Esophagus muscularis mucosa (tissue), 4 donors: ENCODE measurements at regions of chr3 and their contacts with region 1.

Region 1: GRCh38 chr3:64267721-64268604 is 42.7 kb upstream of the PRICKLE2 start:
- DNase-seq: peak; percentile 93
- H3K4me3 ChIP-seq: peak overlapping the region; percentile 78 to 80 (median 80)
- H3K27ac ChIP-seq: peak overlapping the region; percentile 92 to 96 (median 94)
- H3K4me1 ChIP-seq: peaks cover 37 to 48% (median 41%) of the 10 kb centered on the region in 4 donors
- H3K27me3 ChIP-seq: no peaks in the 10 kb centered on the region
- CTCF ChIP-seq: peak in 1 of 3 experiments; percentile 9
- EP300 ChIP-seq: no peak
- POLR2A ChIP-seq: peak; percentile 57

Region 2: GRCh38 chr3:64030741-64031140 is 237.2 kb before region 1 on chr3:
- intact Hi-C with region 1: loop called (anchors 10 kb)
- DNase-seq: no peak
- H3K4me3 ChIP-seq: peak overlapping the region; percentile 19 to 42 (median 34)
- H3K27ac ChIP-seq: peak overlapping the region in 2 of 4 donors; percentile 33 to 62
- H3K4me1 ChIP-seq: peaks cover 0 to 23% (median 19%) of the 10 kb centered on the region in 4 donors
- H3K27me3 ChIP-seq: no peaks in the 10 kb centered on the region
- CTCF ChIP-seq: peak; percentile 90 to 93 (median 90)
- EP300 ChIP-seq: no peak
- POLR2A ChIP-seq: no peak

Region 3: DNA sequence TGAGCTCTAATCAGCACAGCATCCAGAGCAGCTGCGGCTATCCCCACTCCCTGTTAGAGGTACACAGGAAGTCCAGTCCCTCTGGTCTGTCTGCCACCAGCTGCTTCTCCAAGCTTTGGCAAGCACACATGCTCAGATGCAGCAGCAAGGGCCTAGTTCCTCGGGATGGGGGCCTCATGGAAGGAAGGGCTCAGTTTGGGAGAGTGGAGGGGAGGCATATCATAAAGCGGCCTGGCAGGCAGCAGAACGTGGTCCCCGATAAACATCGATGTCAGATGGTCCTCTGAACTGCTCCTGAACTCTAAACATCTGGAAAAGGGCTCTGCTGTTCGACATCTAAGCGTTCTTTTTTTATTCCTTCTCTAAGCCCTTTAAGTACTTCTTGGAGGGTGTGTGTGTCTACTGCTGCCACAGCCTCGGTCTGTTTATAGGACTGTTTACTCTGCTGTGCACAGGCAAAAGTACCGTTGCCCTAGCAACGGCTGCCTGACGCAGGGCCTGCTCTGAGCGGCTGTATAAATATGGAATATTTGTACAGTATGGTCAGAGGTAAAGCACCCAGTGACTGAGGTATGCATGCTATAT is 117.2 kb before region 1 on chr3:
- intact Hi-C with region 1: loop called (anchors 10 kb)
- DNase-seq: no peak
- H3K4me3 ChIP-seq: no peak overlapping the region
- H3K27ac ChIP-seq: peak overlapping the region; percentile 85 to 89 (median 86)
- H3K4me1 ChIP-seq: peaks cover 25 to 80% (median 49%) of the 10 kb centered on the region in 4 donors
- H3K27me3 ChIP-seq: no peaks in the 10 kb centered on the region
- CTCF ChIP-seq: no peak
- EP300 ChIP-seq: no peak
- POLR2A ChIP-seq: no peak

Region 4: GRCh38 chr3:64213962-64214379 is 54.0 kb before region 1 on chr3:
- intact Hi-C with region 1: loop called (anchors 5 kb)
- DNase-seq: peak; percentile 93
- H3K4me3 ChIP-seq: peak overlapping the region; percentile 33 to 52 (median 44)
- H3K27ac ChIP-seq: peak overlapping the region; percentile 81 to 90 (median 84)
- H3K4me1 ChIP-seq: peaks cover 65 to 100% (median 98%) of the 10 kb centered on the region in 4 donors
- H3K27me3 ChIP-seq: peaks cover 0 to 3% (median 0%) of the 10 kb centered on the region in 4 donors
- CTCF ChIP-seq: no peak
- EP300 ChIP-seq: no peak
- POLR2A ChIP-seq: no peak

Region 5: DNA sequence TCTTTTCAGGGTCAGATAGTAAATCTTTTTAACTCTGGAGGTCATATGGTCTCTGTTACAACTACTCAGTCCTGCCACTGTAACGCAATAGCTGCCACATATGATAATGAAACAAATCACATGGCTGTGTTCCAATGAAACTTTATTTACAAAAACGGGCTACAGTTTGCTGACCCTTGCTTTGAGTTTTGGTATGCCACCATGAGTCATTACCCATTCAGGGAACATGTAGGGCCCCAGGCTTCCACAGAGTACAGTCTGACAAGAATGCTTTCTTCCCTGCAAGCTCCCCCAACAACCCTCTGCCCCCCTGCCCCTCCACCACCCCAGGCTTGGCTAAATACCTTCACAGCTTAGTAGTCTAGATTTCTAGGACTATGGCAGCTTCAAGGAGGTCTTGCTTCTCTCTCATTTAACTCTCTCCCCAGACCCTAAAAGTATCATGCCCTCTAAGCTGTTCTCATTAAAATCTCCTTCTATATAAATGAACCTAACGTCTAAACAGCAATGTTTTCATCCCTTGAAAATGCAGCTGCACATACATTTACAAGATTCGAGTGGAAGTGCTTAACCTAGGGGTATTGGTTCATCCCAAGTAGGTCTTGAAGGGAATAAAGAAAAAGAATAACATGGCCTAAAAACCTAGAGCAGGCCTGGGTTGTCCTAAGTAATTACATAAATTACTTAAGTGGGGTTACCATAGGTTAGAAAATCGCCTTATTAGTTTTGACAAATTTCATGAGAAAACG is 75.2 kb after region 1 on chr3:
- intact Hi-C with region 1: loop called (anchors 5 kb)
- DNase-seq: peak; percentile 42
- H3K4me3 ChIP-seq: no peak overlapping the region
- H3K27ac ChIP-seq: peak overlapping the region; percentile 75 to 85 (median 76)
- H3K4me1 ChIP-seq: peaks cover 19 to 69% (median 61%) of the 10 kb centered on the region in 4 donors
- H3K27me3 ChIP-seq: no peaks in the 10 kb centered on the region
- CTCF ChIP-seq: no peak
- EP300 ChIP-seq: no peak
- POLR2A ChIP-seq: no peak